Gastrocnemius medialis (tissue), 4 donors: ENCODE measurements at regions of chr4 and their contacts with region 1.

Region 1: GRCh38 chr4:168514249-168514852 is 17.5 kb downstream of the PALLD start:
- DNase-seq: no peak
- ATAC-seq: no peak
- H3K4me3 ChIP-seq: no peak overlapping the region
- H3K27ac ChIP-seq: peak overlapping the region in 1 of 4 donors; percentile 49
- H3K4me1 ChIP-seq: peaks cover 11 to 33% of the 10 kb centered on the region in 2 donors
- H3K27me3 ChIP-seq: no peaks in the 10 kb centered on the region
- CTCF ChIP-seq: peak; percentile 30 to 55 (median 38)
- POLR2A ChIP-seq: no peak

Region 2: DNA sequence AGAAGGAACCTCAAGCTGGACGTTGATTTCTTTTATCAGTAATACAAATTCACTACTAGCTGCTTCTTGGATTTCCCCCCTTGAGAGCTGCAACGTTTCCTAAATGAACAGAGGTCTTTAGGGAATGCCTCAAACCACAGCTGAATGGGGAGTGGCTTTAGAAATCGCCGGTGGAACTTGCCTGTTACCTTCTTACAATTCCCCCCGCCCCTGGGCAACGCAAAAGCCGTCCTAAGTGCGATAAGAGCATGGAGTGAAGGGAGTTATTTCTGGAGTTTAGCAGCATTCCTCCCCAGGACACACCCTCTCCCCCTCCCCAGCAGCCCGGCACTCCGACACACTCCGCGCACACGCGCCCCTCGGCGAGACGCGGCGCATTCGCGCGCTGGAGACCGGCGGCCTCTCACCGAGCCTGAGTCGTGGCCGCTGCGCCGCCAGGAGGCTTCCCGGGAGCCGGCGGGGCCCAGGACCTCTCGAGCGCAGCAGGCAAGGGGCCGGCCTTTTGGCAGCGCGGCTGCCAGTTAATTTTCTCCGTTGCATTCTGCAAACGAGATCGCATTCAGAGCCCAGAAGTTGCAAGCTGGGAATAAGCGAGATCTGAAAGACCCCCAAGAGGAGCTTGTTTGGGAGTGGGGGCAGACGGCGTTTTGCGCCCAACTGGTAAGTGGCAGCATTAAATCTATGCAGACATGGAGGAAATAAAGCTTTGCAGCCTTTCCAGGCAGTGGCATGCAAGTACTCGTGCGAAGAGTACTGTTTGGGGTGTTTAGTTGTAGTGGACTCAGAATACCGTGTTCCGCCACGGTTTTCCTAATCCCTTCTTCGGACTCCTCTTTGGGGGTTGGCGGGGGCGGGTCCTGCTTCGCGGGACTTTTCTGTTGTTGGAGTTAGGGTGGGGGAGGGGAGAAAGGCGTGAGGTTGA is 117.2 kb after region 1 on chr4:
- in situ Hi-C with region 1: no loop called
- intact Hi-C with region 1: loop called (anchors 5 kb)
- DNase-seq: peak; percentile 34 to 69
- ATAC-seq: peak; percentile 75 to 77
- H3K4me3 ChIP-seq: peak overlapping the region; percentile 78 to 86 (median 79)
- H3K27ac ChIP-seq: peak overlapping the region; percentile 77 to 89 (median 82)
- H3K4me1 ChIP-seq: peaks cover 31 to 49% of the 10 kb centered on the region in 2 donors
- H3K27me3 ChIP-seq: no peaks in the 10 kb centered on the region
- CTCF ChIP-seq: peak; percentile 40 to 67 (median 52)
- POLR2A ChIP-seq: peak in 1 of 2 donors; percentile 9

Region 3: GRCh38 chr4:168815379-168816345 is 301.3 kb after region 1 on chr4:
- in situ Hi-C with region 1: no loop called
- intact Hi-C with region 1: loop called (anchors 10 kb)
- DNase-seq: no peak
- ATAC-seq: no peak
- H3K4me3 ChIP-seq: peak overlapping the region in 3 of 4 donors; percentile 32 to 39 (median 36)
- H3K27ac ChIP-seq: peak overlapping the region; percentile 61 to 81 (median 66)
- H3K4me1 ChIP-seq: peaks cover 36 to 50% of the 10 kb centered on the region in 2 donors
- H3K27me3 ChIP-seq: no peaks in the 10 kb centered on the region
- CTCF ChIP-seq: no peak
- POLR2A ChIP-seq: no peak

Region 4: DNA sequence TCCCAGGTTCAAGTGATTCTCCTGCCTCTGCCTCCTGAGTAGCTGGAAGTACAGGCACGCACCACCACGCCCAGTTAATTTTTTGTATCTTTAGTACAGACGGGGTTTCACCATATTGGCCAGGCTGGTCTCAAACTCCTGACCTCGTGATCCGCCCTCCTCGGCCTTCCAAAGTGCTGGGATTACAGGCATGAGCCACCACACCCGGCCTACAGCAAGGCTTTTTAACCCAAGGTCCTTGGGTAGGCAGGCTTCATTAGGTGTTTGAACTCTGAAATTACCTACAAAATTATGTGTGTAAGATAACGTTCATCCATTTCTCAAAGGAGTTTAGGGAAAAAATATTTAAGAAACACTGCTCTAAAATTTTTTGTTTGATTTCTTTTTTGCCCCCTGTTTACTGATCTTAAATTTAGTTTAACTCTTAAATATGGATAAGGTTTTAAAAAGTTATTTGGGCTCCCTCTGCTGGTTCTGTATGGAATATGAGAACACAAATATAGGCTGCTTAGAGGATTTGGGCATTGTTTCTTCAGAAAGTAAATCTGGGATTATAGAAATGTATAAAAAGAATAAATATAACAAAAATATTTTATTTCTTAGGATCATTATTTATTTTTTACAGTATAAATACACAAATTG is 402.9 kb after region 1 on chr4:
- in situ Hi-C with region 1: loop called in 1 of 4 experiments (anchors 5 kb)
- intact Hi-C with region 1: no loop called
- DNase-seq: no peak
- ATAC-seq: peak in 1 of 2 donors; percentile 31
- H3K4me3 ChIP-seq: no peak overlapping the region
- H3K27ac ChIP-seq: peak overlapping the region in 3 of 4 donors; percentile 28 to 49 (median 47)
- H3K4me1 ChIP-seq: peaks cover 0 to 6% of the 10 kb centered on the region in 2 donors
- H3K27me3 ChIP-seq: no peaks in the 10 kb centered on the region
- CTCF ChIP-seq: peak; percentile 48 to 82 (median 64)
- POLR2A ChIP-seq: no peak